Aorta (tissue), 5 donors: ENCODE measurements at regions of chr13 and their contacts with region 1.

Region 1: DNA sequence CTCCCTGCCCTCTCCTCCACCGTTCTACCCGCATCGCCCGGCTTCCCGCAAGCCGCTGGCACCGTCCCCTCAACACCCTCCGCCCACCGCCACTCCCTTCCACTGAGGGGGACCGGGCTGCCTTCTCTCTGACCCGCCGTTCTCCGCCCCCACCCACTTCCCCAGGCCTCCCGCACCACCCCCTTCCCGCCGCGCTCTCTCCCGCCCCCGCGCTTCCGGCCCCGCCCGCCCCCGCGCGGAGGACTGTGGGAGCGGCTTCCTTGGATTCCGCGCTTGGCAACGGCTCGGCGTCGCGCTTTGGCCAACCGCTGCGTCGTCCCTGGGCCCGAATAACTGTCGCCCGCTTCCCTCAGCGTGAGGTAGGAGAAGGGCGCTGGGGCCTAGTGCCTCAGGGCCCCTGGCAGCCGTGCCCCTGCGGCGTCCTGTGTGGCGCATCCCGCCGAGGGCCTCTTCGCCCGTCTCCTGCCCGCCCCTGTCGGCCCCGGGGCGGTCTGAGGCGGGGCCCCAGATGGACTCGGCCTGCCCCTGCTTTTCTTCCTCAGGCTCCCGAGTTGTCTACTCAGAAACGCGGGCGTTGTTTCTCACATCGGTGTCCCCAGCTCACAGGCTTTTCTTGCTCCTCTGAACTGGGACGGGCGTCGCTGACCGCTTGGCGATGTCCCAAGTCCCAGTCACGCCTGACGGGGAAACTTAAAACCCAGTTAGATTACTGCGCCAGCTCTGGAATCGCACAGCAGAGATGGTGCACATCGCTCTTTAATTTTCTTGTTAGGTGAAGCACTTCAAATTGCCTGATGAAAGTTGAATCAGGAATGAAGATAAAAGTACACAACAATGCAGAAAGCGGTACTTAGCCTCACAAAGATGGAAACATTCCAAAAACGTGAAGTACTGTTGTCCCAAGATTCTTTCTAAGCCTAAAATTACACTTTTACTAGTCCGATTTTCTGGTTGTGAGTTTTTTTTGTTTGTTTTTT is at the start of gene IFT88:
- DNase-seq: peak; percentile 95 to 97
- ATAC-seq: peak; percentile 99
- H3K4me3 ChIP-seq: peak within 1 kb of the TSS; percentile 59 to 89
- H3K27ac ChIP-seq: peak within 1 kb of the TSS; percentile 94 to 95
- H3K4me1 ChIP-seq: peaks cover 0 to 3% of the 10 kb centered on the region in 2 donors
- H3K27me3 ChIP-seq: no peaks in the 10 kb centered on the region
- total RNA-seq, gene IFT88: 12.9 to 19.1 TPM

Region 2: GRCh38 chr13:20258208-20258962 is 308.8 kb before region 1 on chr13:
- intact Hi-C with region 1: no loop called
- DNase-seq: no peak
- ATAC-seq: no peak
- H3K4me3 ChIP-seq: no peak overlapping the region
- H3K27ac ChIP-seq: no peak overlapping the region
- H3K4me1 ChIP-seq: no peaks in the 10 kb centered on the region
- H3K27me3 ChIP-seq: no peaks in the 10 kb centered on the region

Region 3: DNA sequence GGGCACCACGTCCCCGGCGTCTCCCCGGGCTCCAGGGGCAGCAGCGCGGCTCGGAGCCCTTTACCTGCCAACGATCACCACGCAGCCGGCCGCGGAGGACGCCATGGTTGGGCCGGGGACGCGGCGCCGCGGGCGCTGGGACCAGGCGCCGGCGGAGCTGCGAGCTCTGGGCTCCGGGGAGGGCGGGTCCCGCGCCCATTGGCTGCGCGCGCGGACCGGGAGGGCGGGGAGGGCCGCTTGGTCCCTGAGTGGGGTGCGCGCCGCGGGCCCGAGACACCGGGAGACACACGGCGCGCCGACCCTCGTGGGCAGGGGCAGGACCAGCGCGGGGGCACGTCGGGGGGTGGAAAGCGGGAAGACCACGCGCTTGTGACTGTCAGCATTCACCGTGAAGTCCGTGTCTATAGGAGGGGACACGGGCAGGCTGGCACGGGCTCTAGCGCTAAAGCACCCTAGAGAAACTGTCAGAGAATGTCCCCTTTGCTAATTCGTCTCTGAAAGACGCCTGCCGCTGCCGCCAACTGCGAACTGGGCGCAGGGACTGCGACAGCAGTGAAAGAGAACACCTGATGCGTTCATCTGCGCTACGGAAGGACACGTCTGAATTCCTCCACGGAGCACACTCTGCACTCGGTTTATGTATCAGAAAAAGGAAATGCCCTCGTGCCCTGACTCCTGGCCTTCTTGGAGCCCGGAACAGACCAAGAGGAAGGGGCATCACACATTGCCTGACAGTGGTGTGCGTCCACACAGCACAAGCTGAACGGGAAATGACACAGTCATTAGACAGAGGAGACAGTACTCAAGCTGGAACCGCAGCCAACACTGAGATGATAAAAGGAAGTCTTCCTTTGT is 41.3 kb before region 1 on chr13 and contains the start of gene CRYL1:
- intact Hi-C with region 1: loop called (anchors 5 kb)
- DNase-seq: peak; percentile 89 to 93
- ATAC-seq: peak; percentile 95
- H3K4me3 ChIP-seq: peak within 1 kb of the TSS; percentile 67 to 97
- H3K27ac ChIP-seq: peak within 1 kb of the TSS in 1 of 2 donors; percentile 64
- H3K4me1 ChIP-seq: no peaks in the 10 kb centered on the region
- H3K27me3 ChIP-seq: no peaks in the 10 kb centered on the region
- total RNA-seq, gene CRYL1: 29.5 to 41.4 TPM

Region 4: DNA sequence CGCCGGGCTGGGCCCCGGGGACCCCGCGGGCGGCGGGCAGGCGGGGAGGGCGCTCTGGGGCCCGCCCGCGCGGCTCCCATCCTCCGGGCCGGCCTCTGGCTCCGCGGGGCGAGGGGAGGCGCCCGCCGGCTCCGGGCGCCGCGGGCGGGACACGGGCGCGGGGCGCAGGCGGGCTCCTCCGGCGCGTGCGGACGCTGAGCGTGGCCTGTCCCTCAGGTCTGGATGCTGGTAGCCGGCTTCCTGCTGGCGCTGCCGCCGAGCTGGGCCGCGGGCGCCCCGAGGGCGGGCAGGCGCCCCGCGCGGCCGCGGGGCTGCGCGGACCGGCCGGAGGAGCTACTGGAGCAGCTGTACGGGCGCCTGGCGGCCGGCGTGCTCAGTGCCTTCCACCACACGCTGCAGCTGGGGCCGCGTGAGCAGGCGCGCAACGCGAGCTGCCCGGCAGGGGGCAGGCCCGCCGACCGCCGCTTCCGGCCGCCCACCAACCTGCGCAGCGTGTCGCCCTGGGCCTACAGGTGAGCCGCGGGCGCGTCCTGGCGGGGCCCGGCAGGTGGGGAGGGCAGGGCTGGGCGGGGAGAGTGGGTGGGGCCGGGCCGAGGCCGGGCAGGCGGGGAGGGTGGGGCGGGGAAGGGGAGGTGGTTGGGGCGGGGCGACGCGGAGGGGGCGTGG is 136.7 kb after region 1 on chr13:
- intact Hi-C with region 1: loop called in 1 of 2 experiments (anchors 10 kb)
- DNase-seq: peak; percentile 83 to 91
- ATAC-seq: peak; percentile 80
- H3K4me3 ChIP-seq: peak overlapping the region; percentile 79 to 91
- H3K27ac ChIP-seq: no peak overlapping the region
- H3K4me1 ChIP-seq: no peaks in the 10 kb centered on the region
- H3K27me3 ChIP-seq: no peaks in the 10 kb centered on the region

Region 5: GRCh38 chr13:20713751-20714150 is 146.6 kb after region 1 on chr13:
- intact Hi-C with region 1: loop called (anchors 5 to 10 kb)
- DNase-seq: peak; percentile 76 to 85
- ATAC-seq: peak; percentile 55
- H3K4me3 ChIP-seq: no peak overlapping the region
- H3K27ac ChIP-seq: no peak overlapping the region
- H3K4me1 ChIP-seq: peaks cover 0 to 3% of the 10 kb centered on the region in 2 donors
- H3K27me3 ChIP-seq: no peaks in the 10 kb centered on the region

Region 6: GRCh38 chr13:20773194-20774080 is 206.3 kb after region 1 on chr13 and contains the start of gene EEF1AKMT1:
- intact Hi-C with region 1: loop called in 1 of 2 experiments (anchors 5 kb)
- DNase-seq: peak; percentile 97 to 98
- ATAC-seq: peak; percentile 100
- H3K4me3 ChIP-seq: peak within 1 kb of the TSS; percentile 12 to 55
- H3K27ac ChIP-seq: peak within 1 kb of the TSS; percentile 20 to 36
- H3K4me1 ChIP-seq: no peaks in the 10 kb centered on the region
- H3K27me3 ChIP-seq: no peaks in the 10 kb centered on the region
- total RNA-seq, gene EEF1AKMT1: 9.1 to 10.1 TPM